AG04449 (cell line): ENCODE measurements at regions of chr13 and their contacts with region 1.

Region 1: DNA sequence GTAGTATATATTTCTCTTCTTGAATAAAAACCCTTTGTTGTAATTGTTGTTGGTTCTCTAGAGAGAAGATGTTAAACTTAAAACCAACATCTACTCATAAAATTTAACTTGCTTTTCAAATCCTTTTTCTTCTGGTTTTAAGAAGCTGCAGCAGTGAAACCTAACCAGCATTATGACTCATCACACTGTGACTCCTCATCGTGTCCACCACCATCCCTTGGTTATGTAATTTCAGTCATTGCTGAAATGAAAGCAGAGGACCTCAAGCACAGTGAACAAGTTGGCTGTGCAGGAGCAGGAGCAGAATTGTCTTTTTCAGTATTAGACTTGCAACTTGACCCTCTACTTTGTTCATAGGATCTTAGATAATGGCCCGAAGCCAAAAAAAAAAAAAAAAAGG is 64.9 kb upstream of the HTR2A start:
- DNase-seq: peak; percentile 53
- H3K4me3 ChIP-seq: no peak overlapping the region
- CTCF ChIP-seq: no peak

Region 2: GRCh38 chr13:46975173-46975572 is 13.5 kb after region 1 on chr13:
- CTCF ChIA-PET with region 1: interaction called, 44 read pairs
- POLR2A ChIA-PET with region 1: no interaction called
- DNase-seq: no peak
- H3K4me3 ChIP-seq: no peak overlapping the region
- CTCF ChIP-seq: no peak

Region 3: GRCh38 chr13:46992383-46992952 is 30.7 kb after region 1 on chr13:
- CTCF ChIA-PET with region 1: interaction called, 11 read pairs
- POLR2A ChIA-PET with region 1: no interaction called
- DNase-seq: no peak
- H3K4me3 ChIP-seq: no peak overlapping the region
- CTCF ChIP-seq: peak; percentile 31

Region 4: GRCh38 chr13:47109028-47109427 is 147.3 kb after region 1 on chr13:
- CTCF ChIA-PET with region 1: no interaction called
- POLR2A ChIA-PET with region 1: no interaction called
- DNase-seq: no peak
- H3K4me3 ChIP-seq: no peak overlapping the region
- CTCF ChIP-seq: no peak